ENCODE measurements at regions of chr1 and their contacts with region 1.

Region 1: GRCh38 chr1:174953285-174954072 is 46.3 kb upstream of the CACYBP start:
- DNase-seq: no peak
- ATAC-seq: no peak
- H3K4me3 ChIP-seq: no peak overlapping the region
- H3K4me3 Mint-ChIP-seq: no peak overlapping the region
- H3K27ac ChIP-seq: no peak overlapping the region
- H3K27ac Mint-ChIP-seq: peak overlapping the region; percentile 61
- H3K4me1 ChIP-seq: peaks cover 6% of the 10 kb centered on the region
- H3K4me1 Mint-ChIP-seq: peaks cover 40% of the 10 kb centered on the region
- H3K27me3 ChIP-seq: no peaks in the 10 kb centered on the region
- H3K27me3 Mint-ChIP-seq: no peaks in the 10 kb centered on the region
- CTCF ChIP-seq: no peak

Region 2: GRCh38 chr1:174702011-174702410 is 251.5 kb before region 1 on chr1:
- CTCF ChIA-PET with region 1: no interaction called
- POLR2A ChIA-PET with region 1: no interaction called
- intact Hi-C with region 1: no loop called
- DNase-seq: no peak
- ATAC-seq: no peak
- H3K4me3 ChIP-seq: no peak overlapping the region
- H3K4me3 Mint-ChIP-seq: no peak overlapping the region
- H3K27ac ChIP-seq: no peak overlapping the region
- H3K27ac Mint-ChIP-seq: no peak overlapping the region
- H3K4me1 ChIP-seq: no peaks in the 10 kb centered on the region
- H3K4me1 Mint-ChIP-seq: no peaks in the 10 kb centered on the region
- H3K27me3 ChIP-seq: no peaks in the 10 kb centered on the region
- H3K27me3 Mint-ChIP-seq: no peaks in the 10 kb centered on the region
- CTCF ChIP-seq: no peak

Region 3: DNA sequence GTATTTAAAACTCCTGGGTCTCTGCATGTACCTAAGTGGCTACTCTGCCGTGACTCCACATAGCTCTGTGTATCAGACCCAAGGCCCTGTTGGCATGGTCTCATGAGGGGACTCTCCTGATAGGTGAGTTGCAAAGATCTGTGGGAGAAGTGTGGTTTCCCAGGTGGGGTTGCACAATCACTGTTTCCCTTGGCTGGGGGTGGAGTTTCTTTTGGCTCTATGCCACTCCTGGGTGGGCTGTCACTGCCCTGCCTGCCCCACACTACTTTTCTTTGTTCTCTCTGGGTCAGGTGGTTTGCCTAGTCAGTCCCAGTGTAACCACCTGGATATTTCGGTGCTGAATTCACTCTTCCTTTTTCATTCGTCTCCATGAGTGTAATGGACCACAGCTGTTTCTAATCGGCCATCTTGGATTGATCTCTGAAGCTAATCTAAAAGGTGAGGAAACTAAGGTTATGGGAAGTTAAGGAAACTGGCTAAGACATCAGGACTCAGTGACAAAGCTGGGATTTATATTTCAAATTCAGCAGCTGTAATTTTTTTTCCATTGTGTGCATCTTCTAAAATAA is 50.9 kb before region 1 on chr1:
- CTCF ChIA-PET with region 1: no interaction called
- POLR2A ChIA-PET with region 1: no interaction called
- intact Hi-C with region 1: loop called in 1 of 2 experiments (anchors 5 kb)
- DNase-seq: no peak
- ATAC-seq: no peak
- H3K4me3 ChIP-seq: no peak overlapping the region
- H3K4me3 Mint-ChIP-seq: no peak overlapping the region
- H3K27ac ChIP-seq: no peak overlapping the region
- H3K27ac Mint-ChIP-seq: no peak overlapping the region
- H3K4me1 ChIP-seq: no peaks in the 10 kb centered on the region
- H3K4me1 Mint-ChIP-seq: peaks cover under 1% of the 10 kb centered on the region
- H3K27me3 ChIP-seq: no peaks in the 10 kb centered on the region
- H3K27me3 Mint-ChIP-seq: no peaks in the 10 kb centered on the region
- CTCF ChIP-seq: no peak

Region 4: GRCh38 chr1:174920093-174920492 is 33.4 kb before region 1 on chr1:
- CTCF ChIA-PET with region 1: no interaction called
- POLR2A ChIA-PET with region 1: no interaction called
- intact Hi-C with region 1: no loop called
- DNase-seq: no peak
- ATAC-seq: no peak
- H3K4me3 ChIP-seq: no peak overlapping the region
- H3K4me3 Mint-ChIP-seq: no peak overlapping the region
- H3K27ac ChIP-seq: no peak overlapping the region
- H3K27ac Mint-ChIP-seq: no peak overlapping the region
- H3K4me1 ChIP-seq: no peaks in the 10 kb centered on the region
- H3K4me1 Mint-ChIP-seq: peaks cover 12% of the 10 kb centered on the region
- H3K27me3 ChIP-seq: no peaks in the 10 kb centered on the region
- H3K27me3 Mint-ChIP-seq: no peaks in the 10 kb centered on the region
- CTCF ChIP-seq: no peak

Measured in CD4-positive, alpha-beta T cell (primary cell).